ENCODE measurements at regions of chr12 and their contacts with region 1.

Region 1: GRCh38 chr12:6335451-6336078 is 6.3 kb downstream of the TNFRSF1A start:
- DNase-seq: peak; percentile 94
- H3K4me3 Mint-ChIP-seq: no peak overlapping the region
- H3K27ac Mint-ChIP-seq: no peak overlapping the region
- H3K4me1 Mint-ChIP-seq: peaks cover 20% of the 10 kb centered on the region
- H3K27me3 Mint-ChIP-seq: no peaks in the 10 kb centered on the region

Region 2: GRCh38 chr12:6047249-6048237 is 288.0 kb before region 1 on chr12:
- CTCF ChIA-PET with region 1: no interaction called
- POLR2A ChIA-PET with region 1: no interaction called
- intact Hi-C with region 1: no loop called
- DNase-seq: no peak
- H3K4me3 Mint-ChIP-seq: no peak overlapping the region
- H3K27ac Mint-ChIP-seq: no peak overlapping the region
- H3K4me1 Mint-ChIP-seq: no peaks in the 10 kb centered on the region
- H3K27me3 Mint-ChIP-seq: peaks cover 6% of the 10 kb centered on the region

Region 3: GRCh38 chr12:6367065-6367968 is 31.8 kb after region 1 on chr12:
- CTCF ChIA-PET with region 1: interaction called, 35 read pairs
- POLR2A ChIA-PET with region 1: interaction called, 4 read pairs
- intact Hi-C with region 1: loop called (anchors 1 kb)
- DNase-seq: peak; percentile 53
- H3K4me3 Mint-ChIP-seq: no peak overlapping the region
- H3K27ac Mint-ChIP-seq: peak overlapping the region; percentile 38
- H3K4me1 Mint-ChIP-seq: peaks cover 25% of the 10 kb centered on the region
- H3K27me3 Mint-ChIP-seq: no peaks in the 10 kb centered on the region

Region 4: DNA sequence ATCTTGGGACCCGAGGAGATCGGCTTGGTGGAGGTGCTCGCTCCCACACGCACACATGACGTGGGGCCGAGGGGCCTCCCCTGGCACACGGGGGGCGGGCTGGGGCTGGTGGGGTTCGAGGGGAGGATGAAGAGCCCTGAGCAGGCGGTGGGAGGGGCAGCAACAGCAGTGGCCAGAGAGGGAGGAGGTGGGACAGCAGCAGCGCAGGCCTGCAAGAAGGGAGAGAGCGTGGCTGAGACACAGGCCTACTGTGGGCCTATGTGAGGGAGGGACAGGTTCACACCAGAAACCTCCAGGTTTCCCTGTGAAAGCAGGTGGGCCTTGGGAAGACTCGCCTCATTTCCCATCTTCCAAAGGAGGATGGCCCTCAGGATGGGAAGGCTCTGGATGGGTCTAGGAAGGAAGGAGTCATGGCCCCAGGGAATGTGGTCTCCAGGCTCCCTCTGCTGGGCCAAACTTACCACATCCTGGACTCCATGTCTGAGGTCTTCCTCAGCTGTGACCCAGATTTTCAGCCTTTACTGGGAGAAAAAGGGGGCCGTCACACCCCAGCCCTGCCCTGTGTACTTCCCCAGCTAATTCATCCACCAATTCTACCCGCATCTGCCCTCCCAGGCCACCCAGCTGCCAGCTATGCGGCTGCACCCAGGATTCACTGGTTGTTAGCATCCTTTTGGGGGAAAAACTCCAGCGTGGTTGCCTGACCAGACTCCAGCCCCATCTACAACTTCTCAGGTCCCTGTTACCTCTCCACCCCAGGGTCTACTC is 362.2 kb after region 1 on chr12:
- CTCF ChIA-PET with region 1: no interaction called
- POLR2A ChIA-PET with region 1: no interaction called
- intact Hi-C with region 1: no loop called
- DNase-seq: peak; percentile 37
- H3K4me3 Mint-ChIP-seq: no peak overlapping the region
- H3K27ac Mint-ChIP-seq: no peak overlapping the region
- H3K4me1 Mint-ChIP-seq: peaks cover 13% of the 10 kb centered on the region
- H3K27me3 Mint-ChIP-seq: peaks cover 32% of the 10 kb centered on the region

Measured in activated CD4-positive, alpha-beta memory T cell treated with anti-CD3 and anti-CD28 coated beads for 36 hours (primary cell).